ENCODE measurements at regions of chr22 and their contacts with region 1.

Region 1: DNA sequence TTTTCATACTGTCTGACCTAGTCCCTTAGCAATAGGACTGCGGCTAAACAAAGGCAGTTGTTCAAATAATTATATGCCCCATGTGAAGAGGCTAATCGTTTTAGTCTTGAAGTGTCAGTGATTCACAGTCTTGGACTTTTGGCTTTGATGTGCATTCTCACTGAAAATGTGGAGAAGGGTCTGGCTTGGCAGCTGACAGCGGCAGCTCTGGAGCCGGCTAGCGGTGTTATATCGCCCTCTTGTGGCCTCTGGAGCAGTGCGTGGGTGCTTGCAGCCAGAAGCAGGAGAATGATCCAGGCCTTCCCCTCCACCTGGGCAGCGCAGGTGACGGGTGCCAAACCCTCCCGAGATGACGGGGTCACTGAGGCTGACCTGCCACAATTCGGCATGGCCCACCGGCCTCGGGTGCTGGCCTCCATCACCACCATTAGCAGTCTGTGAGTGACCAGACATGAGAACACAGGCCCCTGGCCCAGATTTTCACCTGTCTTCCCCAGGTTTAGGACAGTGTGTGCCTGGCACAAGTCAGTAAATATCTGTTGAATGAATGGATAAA is 90.3 kb upstream of the PITPNB start:
- DNase-seq: peak; percentile 70
- H3K4me3 ChIP-seq: no peak overlapping the region
- H3K27ac ChIP-seq: no peak overlapping the region
- H3K4me1 ChIP-seq: no peaks in the 10 kb centered on the region
- H3K27me3 ChIP-seq: no peaks in the 10 kb centered on the region
- CTCF ChIP-seq: peak; percentile 72 to 92 (median 89)
- POLR2A ChIP-seq: no peak

Region 2: GRCh38 chr22:26756675-26757293 is 1252.6 kb before region 1 on chr22:
- intact Hi-C with region 1: loop called (anchors 5 kb)
- DNase-seq: no peak
- H3K4me3 ChIP-seq: peak overlapping the region in 1 of 2 donors; percentile 5
- H3K27ac ChIP-seq: no peak overlapping the region
- H3K4me1 ChIP-seq: no peaks in the 10 kb centered on the region
- H3K27me3 ChIP-seq: no peaks in the 10 kb centered on the region
- CTCF ChIP-seq: peak; percentile 66 to 91 (median 84)
- POLR2A ChIP-seq: no peak

Region 3: DNA sequence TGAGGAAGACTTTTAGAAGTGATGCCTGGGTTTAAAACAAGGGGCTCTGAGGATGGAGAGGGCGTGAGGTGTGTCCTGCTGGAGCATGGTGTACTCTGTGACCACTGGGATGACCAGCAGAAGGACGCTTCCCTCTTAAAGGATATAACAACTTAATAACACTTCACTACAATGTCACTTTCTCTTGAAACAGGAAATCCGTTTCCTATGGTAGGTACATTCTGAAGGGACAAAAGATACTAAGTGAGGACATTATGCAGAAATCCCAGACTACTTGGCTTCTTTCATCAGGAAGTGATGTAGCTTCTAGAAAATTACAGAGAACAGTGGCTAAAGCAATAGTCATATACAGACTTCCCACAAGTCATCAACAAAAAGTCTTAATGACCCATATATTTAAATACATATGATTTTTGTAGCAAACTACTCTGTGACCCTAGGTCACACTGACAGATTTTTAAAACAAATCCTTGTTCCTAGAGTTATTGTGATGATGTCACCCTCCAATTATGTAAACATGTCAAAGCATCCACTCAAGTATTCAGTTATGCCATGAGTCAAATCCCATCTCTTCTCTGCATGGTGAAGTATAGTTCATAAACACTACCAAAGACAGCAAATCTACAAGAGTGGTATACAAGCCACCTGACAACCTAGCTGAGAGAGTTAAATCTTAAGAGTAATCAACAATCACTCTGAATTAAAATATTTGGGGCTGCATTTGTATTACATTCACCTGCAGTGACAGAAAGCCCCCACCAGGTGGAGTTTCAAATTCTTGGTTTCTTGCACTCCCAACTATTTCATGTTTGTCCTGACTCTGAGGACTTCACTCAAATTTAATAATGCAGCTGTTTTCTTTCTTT is 123.1 kb before region 1 on chr22:
- intact Hi-C with region 1: loop called (anchors 2 kb)
- DNase-seq: peak; percentile 23
- H3K4me3 ChIP-seq: no peak overlapping the region
- H3K27ac ChIP-seq: no peak overlapping the region
- H3K4me1 ChIP-seq: no peaks in the 10 kb centered on the region
- H3K27me3 ChIP-seq: no peaks in the 10 kb centered on the region
- CTCF ChIP-seq: peak; percentile 79 to 88 (median 82)
- POLR2A ChIP-seq: no peak